ENCODE measurements at regions of chr3 and their contacts with region 1.

Region 1: GRCh38 chr3:128075516-128076482 is 23.6 kb downstream of the SEC61A1 start:
- DNase-seq: peak; percentile 85 to 94 (median 91)
- H3K4me3 ChIP-seq: peak overlapping the region in 2 of 4 donors; percentile 8 to 67
- H3K27ac ChIP-seq: peak overlapping the region in 4 of 5 donors; percentile 20 to 76 (median 41)
- H3K4me1 ChIP-seq: peaks cover 4 to 14% of the 10 kb centered on the region in 2 donors
- H3K27me3 ChIP-seq: no peaks in the 10 kb centered on the region
- CTCF ChIP-seq: peak; percentile 77 to 99 (median 88)
- POLR2A ChIP-seq: peak; percentile 20 to 31

Region 2: GRCh38 chr3:127735767-127736704 is 339.8 kb before region 1 on chr3:
- intact Hi-C with region 1: no loop called
- DNase-seq: peak in 6 of 7 donors; percentile 46 to 67 (median 62)
- H3K4me3 ChIP-seq: no peak overlapping the region
- H3K27ac ChIP-seq: peak overlapping the region in 4 of 5 donors; percentile 46 to 84 (median 64)
- H3K4me1 ChIP-seq: peaks cover 10 to 65% of the 10 kb centered on the region in 2 donors
- H3K27me3 ChIP-seq: no peaks in the 10 kb centered on the region
- CTCF ChIP-seq: no peak
- POLR2A ChIP-seq: no peak

Region 3: GRCh38 chr3:128133273-128134084 is 57.7 kb after region 1 on chr3:
- intact Hi-C with region 1: loop called (anchors 10 kb)
- DNase-seq: peak in 6 of 7 donors; percentile 46 to 65 (median 58)
- H3K4me3 ChIP-seq: no peak overlapping the region
- H3K27ac ChIP-seq: no peak overlapping the region
- H3K4me1 ChIP-seq: no peaks in the 10 kb centered on the region
- H3K27me3 ChIP-seq: no peaks in the 10 kb centered on the region
- CTCF ChIP-seq: peak; percentile 41 to 87 (median 79)
- POLR2A ChIP-seq: no peak

Region 4: DNA sequence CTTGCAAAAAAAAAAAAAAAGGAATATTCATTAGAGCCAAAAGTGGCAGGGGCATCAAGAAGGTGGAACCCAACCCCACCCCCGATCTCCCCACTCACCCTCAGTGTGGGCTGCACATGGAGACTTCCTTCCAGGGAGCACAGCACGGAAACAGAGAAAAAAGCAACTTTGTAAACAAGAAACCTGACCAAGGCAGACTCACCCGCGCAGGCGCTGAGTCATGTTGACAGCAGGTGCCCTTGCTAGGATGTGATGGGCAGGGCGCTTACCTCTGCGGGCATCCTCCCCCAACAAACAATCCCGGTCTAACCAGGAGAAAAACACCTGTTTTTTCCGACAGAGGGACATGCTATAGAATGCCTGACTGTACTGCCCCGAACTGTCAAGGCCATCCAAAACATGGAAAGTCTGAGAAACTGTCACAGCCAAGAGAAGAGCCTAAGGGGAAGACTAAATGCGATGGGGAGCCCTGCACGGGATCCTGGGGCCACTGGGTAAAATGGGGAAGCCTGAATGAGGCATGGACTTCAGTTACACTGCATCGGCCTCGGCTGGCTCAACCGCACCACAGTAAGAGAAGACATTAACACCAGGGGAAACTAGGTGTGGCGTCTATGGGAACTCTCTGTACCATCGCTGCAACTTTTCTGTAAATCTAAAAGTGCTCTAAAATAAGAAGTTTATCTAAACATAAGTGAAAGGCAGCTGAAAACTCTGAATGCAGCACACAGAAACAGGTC is 483.9 kb after region 1 on chr3:
- intact Hi-C with region 1: no loop called
- DNase-seq: no peak
- H3K4me3 ChIP-seq: no peak overlapping the region
- H3K27ac ChIP-seq: no peak overlapping the region
- H3K4me1 ChIP-seq: no peaks in the 10 kb centered on the region
- H3K27me3 ChIP-seq: peaks cover 18% of the 10 kb centered on the region
- CTCF ChIP-seq: no peak
- POLR2A ChIP-seq: no peak

Region 5: DNA sequence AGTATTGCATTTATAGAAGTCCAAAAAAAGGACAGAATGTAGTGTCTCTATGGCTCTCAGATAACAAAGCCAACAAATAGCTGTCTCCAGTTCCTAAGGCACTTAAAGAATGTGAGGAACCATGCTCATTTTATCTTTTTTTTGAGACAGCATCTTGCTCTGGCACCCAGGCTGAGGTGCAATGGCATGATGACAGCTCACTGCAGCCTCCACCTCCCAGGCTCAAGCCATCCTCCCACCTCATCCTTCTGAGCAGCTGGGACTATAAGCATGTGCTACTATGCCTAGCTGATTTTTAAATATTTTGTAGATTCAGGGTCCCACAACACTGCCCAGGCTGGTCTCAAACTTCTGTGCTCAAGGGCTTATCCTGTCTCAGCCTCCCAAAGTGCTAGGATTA is 1069.0 kb after region 1 on chr3:
- intact Hi-C with region 1: loop called in 1 of 2 experiments (anchors 10 kb)
- DNase-seq: no peak
- H3K4me3 ChIP-seq: no peak overlapping the region
- H3K27ac ChIP-seq: no peak overlapping the region
- H3K4me1 ChIP-seq: no peaks in the 10 kb centered on the region
- H3K27me3 ChIP-seq: no peaks in the 10 kb centered on the region
- CTCF ChIP-seq: no peak
- POLR2A ChIP-seq: no peak

Measured in adrenal gland (tissue), 19 donors.